ENCODE measurements at regions of chrX and their contacts with region 1.

Region 1: GRCh38 chrX:14029425-14030173 is at the start of gene GEMIN8:
- DNase-seq: peak; percentile 95
- H3K4me3 Mint-ChIP-seq: peak within 1 kb of the TSS; percentile 99
- H3K27ac Mint-ChIP-seq: peak within 1 kb of the TSS; percentile 100
- H3K4me1 Mint-ChIP-seq: peaks cover 25% of the 10 kb centered on the region
- H3K27me3 Mint-ChIP-seq: peaks cover 6% of the 10 kb centered on the region
- total RNA-seq, gene GEMIN8: 16.3 and 17.1 TPM in 2 replicates

Region 2: DNA sequence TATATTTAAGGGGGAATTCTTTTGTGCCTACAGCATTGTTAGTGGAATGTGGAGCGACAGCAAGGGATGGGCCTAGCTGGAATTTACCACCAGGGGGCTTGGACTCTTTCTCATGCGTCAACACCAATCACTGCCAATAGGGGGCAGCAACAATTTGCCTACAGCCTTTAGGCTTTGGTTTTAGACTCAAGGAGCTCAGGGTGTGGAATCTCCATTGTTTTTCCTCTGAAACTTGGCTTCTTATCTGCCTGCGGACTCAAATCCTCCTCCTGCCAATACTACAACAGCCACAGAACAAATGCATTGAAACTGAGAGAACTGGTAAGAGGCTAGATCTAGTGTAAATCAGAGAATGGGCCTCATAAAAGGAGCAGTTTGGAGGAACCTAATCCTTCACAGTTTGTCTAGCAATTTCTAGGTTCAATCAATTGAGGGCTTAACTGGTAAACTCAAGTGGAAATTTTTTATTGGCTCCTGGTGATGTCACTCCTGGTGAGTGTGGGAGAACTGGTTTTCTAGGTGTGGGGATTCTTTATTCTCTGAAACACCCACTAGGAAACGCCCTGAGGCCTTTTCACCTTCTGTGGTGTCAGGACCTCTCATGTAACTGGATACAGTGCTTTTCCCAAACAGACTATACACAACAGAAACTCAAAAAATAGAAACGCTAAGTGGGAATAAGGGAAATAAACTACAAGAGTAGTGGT is 1082.6 kb before region 1 on chrX:
- intact Hi-C with region 1: loop called (anchors 5 kb)
- DNase-seq: peak; percentile 92
- H3K4me3 Mint-ChIP-seq: peak overlapping the region; percentile 66
- H3K27ac Mint-ChIP-seq: peak overlapping the region; percentile 96
- H3K4me1 Mint-ChIP-seq: peaks cover 48% of the 10 kb centered on the region
- H3K27me3 Mint-ChIP-seq: no peaks in the 10 kb centered on the region

Region 3: DNA sequence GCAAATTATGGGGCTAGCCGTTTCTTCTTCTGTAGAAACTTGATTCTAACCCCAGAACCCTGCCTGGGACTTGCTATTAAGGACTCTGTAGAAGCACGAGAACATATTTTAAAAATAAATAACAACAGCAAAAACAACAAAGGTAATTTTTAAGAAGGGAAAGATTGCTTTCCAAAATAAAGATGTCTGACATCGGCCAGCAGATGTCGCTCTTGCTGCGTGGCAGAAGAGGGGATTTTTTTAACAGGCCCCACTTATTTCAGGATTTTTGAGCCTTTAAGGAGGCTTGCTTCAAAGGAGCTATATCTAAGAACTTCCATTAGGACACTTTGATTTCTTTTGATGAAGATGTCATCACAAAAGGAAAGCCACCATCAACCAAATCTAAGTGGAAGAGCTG is 523.0 kb before region 1 on chrX:
- intact Hi-C with region 1: loop called (anchors 1 kb)
- DNase-seq: peak; percentile 81
- H3K4me3 Mint-ChIP-seq: no peak overlapping the region
- H3K27ac Mint-ChIP-seq: no peak overlapping the region
- H3K4me1 Mint-ChIP-seq: peaks cover 4% of the 10 kb centered on the region
- H3K27me3 Mint-ChIP-seq: no peaks in the 10 kb centered on the region

Region 4: DNA sequence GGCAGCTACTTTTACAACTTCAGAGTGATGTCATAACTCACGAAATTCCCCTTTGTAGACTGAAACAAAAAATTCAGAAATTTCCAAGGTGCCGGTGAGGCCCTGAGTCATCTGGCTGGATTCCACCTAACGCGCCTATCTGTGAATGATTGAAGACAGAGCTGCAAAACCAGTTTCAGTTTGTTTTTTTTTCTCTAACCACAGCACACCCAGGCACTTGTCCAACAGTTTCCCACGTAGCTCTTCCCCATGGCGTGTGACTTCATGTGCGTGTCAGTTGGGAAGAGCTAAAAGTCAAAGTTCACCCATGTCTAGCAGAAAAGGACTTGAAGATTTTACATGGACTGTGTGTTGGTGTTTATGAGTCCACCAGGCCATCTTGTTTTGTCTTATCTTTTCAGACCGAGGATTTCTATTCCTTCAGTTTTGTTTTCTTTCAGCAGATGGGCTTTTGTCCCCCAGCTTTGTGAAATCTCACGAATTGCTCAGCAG is 360.3 kb before region 1 on chrX:
- intact Hi-C with region 1: loop called (anchors 1 kb)
- DNase-seq: peak; percentile 75
- H3K4me3 Mint-ChIP-seq: peak overlapping the region; percentile 63
- H3K27ac Mint-ChIP-seq: peak overlapping the region; percentile 93
- H3K4me1 Mint-ChIP-seq: peaks cover 11% of the 10 kb centered on the region
- H3K27me3 Mint-ChIP-seq: no peaks in the 10 kb centered on the region

Region 5: DNA sequence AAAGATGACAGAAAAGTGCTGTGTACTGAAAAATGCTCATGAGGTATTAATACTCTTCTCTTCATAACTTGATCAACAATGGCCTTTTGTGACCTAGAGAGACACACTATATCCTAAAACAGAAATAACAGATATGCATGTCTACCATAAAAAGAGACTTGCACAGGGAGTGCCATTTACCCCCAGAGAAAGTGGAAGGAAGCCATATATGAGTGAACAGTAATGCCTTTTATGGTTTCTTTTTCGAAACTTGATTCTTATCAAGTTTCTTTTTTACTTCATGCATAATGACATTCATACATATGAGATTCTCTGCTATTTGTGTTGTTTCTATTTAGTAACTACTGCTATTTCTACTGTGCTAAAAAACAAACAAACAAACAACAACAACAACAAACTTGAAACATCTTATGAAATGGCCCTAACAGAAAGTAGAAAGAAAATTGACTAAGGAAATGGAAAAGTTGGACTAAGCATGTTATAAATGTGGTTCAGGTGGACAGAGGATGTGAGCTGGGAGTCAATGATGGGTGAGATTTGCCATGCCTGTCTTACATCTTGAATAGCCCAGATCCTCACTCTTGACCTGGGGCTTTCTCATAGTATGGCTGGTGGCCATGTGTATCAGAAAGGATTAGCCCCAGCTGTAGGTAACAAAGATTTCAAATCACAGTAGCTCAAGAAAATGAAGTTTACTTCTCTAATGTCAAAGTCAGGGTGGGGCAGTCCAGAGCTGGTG is 43.7 kb before region 1 on chrX:
- intact Hi-C with region 1: loop called (anchors 5 kb)
- DNase-seq: no peak
- H3K4me3 Mint-ChIP-seq: no peak overlapping the region
- H3K27ac Mint-ChIP-seq: no peak overlapping the region
- H3K4me1 Mint-ChIP-seq: peaks cover 4% of the 10 kb centered on the region
- H3K27me3 Mint-ChIP-seq: no peaks in the 10 kb centered on the region

Region 6: GRCh38 chrX:14243823-14244222 is 214.2 kb after region 1 on chrX:
- intact Hi-C with region 1: no loop called
- DNase-seq: no peak
- H3K4me3 Mint-ChIP-seq: no peak overlapping the region
- H3K27ac Mint-ChIP-seq: no peak overlapping the region
- H3K4me1 Mint-ChIP-seq: no peaks in the 10 kb centered on the region
- H3K27me3 Mint-ChIP-seq: no peaks in the 10 kb centered on the region

Region 7: DNA sequence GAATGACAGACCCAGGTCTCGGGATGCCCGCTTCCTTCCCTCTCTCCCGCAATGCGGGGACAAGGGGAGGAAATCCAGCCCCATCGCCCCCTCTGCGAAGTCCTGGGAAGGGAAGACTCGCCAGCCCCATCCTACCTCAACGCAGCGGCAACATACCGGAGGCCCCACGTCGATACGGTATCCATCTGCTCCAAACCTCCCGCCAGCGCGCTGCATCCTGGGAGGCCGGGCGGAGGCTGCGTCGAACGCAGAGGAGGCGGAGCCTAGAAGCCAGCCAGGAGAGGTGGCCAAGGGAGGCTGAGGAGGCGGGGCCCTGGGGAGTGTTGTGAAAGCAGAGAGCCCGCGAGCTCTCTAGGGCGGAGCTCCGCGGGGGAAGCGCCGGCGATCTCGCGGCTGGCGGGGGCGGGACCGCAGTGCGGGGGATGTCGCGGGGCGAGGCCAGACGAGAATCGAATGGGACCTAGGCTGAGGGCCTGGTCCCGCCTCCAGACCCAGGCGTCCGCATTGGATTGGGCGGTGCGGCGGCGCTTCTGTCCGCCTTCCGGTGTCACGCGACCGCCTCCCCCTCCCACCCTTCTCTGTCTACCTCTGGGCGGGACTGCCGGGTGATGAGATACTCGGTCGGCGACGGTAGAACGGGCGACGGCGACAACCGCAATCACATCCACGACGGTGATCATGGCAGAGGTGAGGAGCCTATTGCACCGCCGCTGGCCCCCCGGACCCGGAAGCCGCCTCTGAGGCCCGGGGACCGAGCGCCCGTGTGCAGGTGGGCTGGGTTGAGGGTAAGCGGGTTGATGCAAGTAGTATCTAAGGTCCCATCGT is 843.5 kb after region 1 on chrX and contains the starts of genes FANCB and MOSPD2:
- intact Hi-C with region 1: loop called (anchors 1 kb)
- DNase-seq: peak; percentile 98
- H3K4me3 Mint-ChIP-seq: peak within 1 kb of the TSS; percentile 88
- H3K27ac Mint-ChIP-seq: peak within 1 kb of the TSS; percentile 92
- H3K4me1 Mint-ChIP-seq: peaks cover 16% of the 10 kb centered on the region
- H3K27me3 Mint-ChIP-seq: no peaks in the 10 kb centered on the region
- total RNA-seq, gene FANCB: 18.9 TPM in 2 replicates
- total RNA-seq, gene MOSPD2: 15.3 and 16.0 TPM in 2 replicates

Region 8: GRCh38 chrX:15242899-15243555 is 1213.4 kb after region 1 on chrX:
- intact Hi-C with region 1: loop called (anchors 10 kb)
- DNase-seq: peak; percentile 80
- H3K4me3 Mint-ChIP-seq: no peak overlapping the region
- H3K27ac Mint-ChIP-seq: no peak overlapping the region
- H3K4me1 Mint-ChIP-seq: no peaks in the 10 kb centered on the region
- H3K27me3 Mint-ChIP-seq: no peaks in the 10 kb centered on the region

Measured in activated CD4-positive, alpha-beta T cell treated with anti-CD3 and anti-CD28 coated beads, Interleukin-2, amount 10 ng/mL, durations not matched to agents 24 days and 14 days (primary cell).